Activated T-helper 2 cell treated with anti-CD3 and anti-CD28 coated beads, Interferon-gamma antibody, Interleukin-2, Interleukin-4, amounts not matched to agents 10 μg/mL and 5 μg/mL and 100 μg/mL, durations not matched to agents 14 hours and 24 hours and 36 hours (primary cell): ENCODE measurements at regions of chr1 and their contacts with region 1.

Region 1: DNA sequence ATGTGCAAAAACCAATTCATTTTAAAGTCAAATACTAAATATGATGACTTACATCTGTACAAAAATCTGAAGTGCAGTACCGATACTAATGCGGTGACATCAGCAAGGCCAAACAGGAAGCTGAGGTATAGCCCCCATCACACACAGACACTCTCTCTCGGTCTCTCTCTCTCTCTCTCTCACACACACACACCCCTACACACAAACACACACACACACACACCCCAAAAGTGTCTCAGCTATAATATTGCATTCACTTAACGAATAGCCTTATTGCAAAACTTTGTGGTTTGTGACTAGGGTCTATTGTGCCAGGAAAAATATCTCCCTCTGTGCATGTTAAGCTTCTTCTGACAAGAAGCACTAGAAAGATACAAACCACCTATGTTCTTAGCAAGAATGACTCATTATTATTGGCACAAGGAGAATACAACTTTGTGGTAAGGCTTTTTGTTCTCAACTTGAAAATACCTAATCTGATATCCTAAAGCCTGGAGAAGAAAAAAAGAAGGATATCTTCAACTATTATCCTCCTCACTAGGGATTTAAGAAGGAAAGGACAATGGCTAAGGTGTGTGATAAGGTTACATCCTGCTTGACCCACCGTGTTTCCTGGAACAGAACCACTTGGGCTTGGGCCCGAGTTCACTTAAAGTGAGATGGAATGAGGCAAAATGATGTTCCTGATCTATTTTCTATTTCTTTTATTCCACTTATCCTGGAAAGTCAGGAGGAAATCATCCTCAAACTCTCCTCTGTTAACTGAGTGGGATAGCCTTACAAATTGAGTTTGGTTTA is 107.1 kb downstream of the NIBAN1 start:
- DNase-seq: peak; percentile 53
- H3K4me3 Mint-ChIP-seq: peak overlapping the region; percentile 60
- H3K27ac Mint-ChIP-seq: peak overlapping the region; percentile 93
- H3K4me1 Mint-ChIP-seq: peaks cover 40% of the 10 kb centered on the region
- H3K27me3 Mint-ChIP-seq: peaks cover 4% of the 10 kb centered on the region

Region 2: DNA sequence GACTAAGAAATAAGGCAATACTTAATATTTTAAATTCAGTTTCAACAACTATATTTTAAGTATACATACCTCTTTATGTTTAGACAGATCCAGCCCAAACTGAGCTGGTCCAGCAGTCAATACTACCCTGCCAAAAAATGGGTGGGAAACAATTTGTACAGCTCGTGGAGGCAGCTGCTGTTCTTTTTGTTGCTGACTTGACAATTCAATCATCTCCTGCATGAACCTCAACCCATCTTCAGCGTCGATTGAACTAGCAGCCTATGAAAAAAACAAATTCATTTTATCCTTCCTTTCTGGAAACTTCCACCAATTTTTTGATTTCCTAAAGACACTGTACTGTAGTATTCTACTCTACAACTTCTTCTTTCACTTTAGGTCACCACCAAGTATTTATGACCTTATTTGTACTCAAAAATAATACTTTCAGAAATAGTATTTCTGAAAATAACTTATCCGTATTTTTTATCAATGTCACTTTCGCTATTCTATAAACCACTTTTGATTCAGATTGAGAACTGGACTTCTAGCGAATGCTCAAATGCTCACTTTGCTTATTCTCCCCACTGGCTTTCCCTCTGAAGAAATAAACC is 159.0 kb before region 1 on chr1:
- intact Hi-C with region 1: no loop called
- DNase-seq: no peak
- H3K4me3 Mint-ChIP-seq: no peak overlapping the region
- H3K27ac Mint-ChIP-seq: no peak overlapping the region
- H3K4me1 Mint-ChIP-seq: peaks cover 1% of the 10 kb centered on the region
- H3K27me3 Mint-ChIP-seq: no peaks in the 10 kb centered on the region

Region 3: DNA sequence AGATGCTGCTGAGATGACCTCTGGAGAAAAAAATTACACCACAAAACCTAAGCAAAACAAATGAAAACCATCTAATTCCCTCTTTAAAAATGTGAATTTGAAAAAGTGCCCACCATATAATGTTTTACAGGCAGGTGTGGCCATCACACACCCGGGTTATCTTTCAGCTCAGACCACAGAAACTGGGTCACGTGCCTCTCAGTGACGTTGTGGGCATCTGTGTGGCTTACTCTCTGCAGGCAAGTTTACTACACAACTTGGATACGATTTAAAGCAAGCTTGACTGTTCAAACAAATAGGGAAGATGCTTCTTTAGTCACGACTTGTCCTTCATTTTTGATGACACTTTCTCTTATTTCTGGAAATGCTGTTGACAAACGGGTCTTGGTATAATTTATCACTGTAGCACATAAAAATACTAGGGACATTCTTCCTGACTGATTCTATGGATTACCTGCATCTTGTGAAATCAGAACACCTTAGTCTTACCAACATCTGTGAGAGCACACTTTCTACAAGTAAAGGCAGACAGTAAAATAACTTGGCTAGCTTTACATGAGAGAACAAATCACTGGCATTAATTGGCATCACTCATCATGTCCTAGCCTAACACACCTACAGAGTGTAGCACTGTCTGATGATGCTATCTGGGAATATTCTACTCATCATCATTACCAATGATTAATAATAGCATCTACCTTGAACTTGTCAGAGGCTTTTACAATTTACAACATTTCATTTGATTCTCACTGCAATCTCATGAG is 23.3 kb before region 1 on chr1:
- intact Hi-C with region 1: loop called (anchors 2 kb)
- DNase-seq: peak; percentile 56
- H3K4me3 Mint-ChIP-seq: no peak overlapping the region
- H3K27ac Mint-ChIP-seq: no peak overlapping the region
- H3K4me1 Mint-ChIP-seq: peaks cover 35% of the 10 kb centered on the region
- H3K27me3 Mint-ChIP-seq: no peaks in the 10 kb centered on the region

Region 4: DNA sequence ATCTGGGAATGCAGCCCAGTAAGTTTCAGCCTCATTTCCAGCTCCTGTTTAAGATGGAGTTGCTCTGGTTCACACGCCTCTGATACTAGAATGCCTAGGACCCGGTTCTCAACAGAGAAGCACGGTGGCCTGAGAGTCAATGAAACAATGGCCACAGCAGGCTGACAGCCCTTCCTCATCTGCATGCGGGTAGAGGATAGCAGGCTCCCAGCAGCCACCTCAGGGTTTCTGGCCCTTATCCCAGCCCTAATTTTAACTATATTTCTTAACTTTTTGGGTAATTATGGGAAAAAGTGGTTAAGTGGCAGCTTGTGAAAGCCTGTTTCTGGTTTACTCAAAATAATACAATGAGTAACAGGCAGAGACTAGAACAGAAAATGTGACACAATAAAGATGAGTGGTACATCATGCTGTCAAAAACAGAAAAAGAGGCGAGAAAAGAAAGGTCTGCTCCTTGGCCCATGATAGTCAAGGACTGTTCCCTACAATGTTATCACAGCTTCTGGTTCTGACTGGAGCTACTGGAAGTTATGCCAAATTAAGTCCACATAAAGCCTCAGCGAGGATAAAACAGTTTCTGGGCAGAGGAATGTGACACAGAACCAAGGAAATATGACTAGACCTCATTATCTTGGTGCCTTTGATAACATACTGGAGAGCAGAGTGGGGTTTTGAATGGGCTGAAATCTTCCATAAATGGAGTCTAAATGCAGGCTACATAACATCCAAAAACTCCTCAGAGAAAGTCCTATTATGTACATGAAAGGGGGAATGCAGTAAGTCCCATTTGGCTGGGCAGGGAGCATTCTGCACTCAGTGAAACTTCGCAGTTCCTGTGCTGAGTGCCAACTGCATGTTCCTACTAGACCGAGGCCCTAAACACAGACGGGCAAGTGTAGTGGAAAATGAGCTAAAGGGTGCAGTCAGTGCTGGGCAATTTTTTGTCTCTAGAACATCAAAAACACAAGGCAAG is 15.0 kb after region 1 on chr1:
- intact Hi-C with region 1: loop called (anchors 1 kb)
- DNase-seq: no peak
- H3K4me3 Mint-ChIP-seq: peak overlapping the region; percentile 1
- H3K27ac Mint-ChIP-seq: peak overlapping the region; percentile 90
- H3K4me1 Mint-ChIP-seq: peaks cover 31% of the 10 kb centered on the region
- H3K27me3 Mint-ChIP-seq: peaks cover 5% of the 10 kb centered on the region

Region 5: DNA sequence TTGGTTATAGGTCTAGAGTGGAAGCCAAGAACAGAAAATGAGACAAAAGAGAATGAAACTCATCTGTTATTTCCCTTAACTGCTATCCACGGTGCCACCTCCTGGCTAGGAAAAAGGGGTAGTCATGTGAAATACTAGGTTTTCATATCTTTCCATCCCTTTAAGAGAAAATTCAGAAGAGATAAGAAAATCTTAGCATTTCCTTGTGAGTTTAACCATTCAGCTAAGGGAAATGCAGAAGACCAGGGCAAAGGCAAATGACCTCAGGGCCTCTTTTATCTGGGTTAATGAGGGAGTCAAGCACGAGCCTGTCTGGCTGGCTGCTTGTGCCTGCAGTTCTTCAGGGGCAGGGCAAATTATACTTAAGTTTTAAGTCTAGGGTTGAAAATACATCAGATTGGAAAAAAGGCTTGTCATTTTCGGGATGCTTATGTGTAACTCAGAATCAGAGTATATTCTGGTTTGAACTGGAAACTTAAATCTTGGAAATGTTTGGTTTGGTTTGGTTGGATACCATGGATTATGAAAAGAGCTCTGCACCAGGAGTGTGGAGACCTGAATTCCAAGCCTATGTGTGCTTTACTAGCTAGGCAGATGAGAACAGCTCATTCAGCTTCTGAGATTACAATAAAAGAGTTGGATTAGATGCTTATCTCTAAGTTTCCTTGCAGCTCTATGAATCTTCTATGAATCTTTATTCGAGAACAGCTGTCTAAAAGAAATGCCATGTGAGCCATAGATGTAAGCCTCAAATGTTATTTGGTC is 87.2 kb after region 1 on chr1:
- intact Hi-C with region 1: loop called (anchors 1 kb)
- DNase-seq: no peak
- H3K4me3 Mint-ChIP-seq: peak overlapping the region; percentile 27
- H3K27ac Mint-ChIP-seq: peak overlapping the region; percentile 67
- H3K4me1 Mint-ChIP-seq: peaks cover 17% of the 10 kb centered on the region
- H3K27me3 Mint-ChIP-seq: no peaks in the 10 kb centered on the region